Activated T-helper 1 cell treated with anti-CD3 and anti-CD28 coated beads, Interleukin-12 subunit alpha, Interleukin-12 subunit beta, Interleukin-2, Interleukin-4 antibody, amounts not matched to agents 30 ng/mL and 10 ng/mL and 1 ng/mL, durations not matched to agents 14 hours and 24 hours and 36 hours (primary cell): ENCODE measurements at regions of chr18 and their contacts with region 1.

Region 1: GRCh38 chr18:45910405-45911023 is 56.6 kb downstream of the EPG5 start:
- DNase-seq: peak; percentile 25
- H3K4me3 Mint-ChIP-seq: no peak overlapping the region
- H3K27ac Mint-ChIP-seq: no peak overlapping the region
- H3K4me1 Mint-ChIP-seq: no peaks in the 10 kb centered on the region
- H3K27me3 Mint-ChIP-seq: no peaks in the 10 kb centered on the region

Region 2: DNA sequence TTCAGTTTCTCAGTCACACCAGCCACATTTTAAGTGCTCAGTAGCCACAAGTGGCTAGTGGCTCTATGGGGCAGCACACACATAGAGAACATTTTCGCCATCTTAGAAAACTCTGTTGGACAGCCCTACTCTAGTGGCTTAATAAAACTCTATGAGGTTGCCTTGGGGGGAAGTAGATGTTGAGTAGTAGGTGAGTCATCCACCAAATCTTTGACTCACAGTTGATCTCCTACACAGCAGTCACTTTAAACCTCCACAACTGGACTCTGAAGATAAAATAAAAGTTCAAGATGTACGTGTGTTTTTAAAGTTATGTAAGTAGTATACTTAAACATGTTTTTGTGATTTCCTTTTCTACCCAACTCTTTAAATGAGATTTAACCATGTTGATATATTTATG is 850.8 kb before region 1 on chr18:
- intact Hi-C with region 1: no loop called
- DNase-seq: no peak
- H3K4me3 Mint-ChIP-seq: no peak overlapping the region
- H3K27ac Mint-ChIP-seq: no peak overlapping the region
- H3K4me1 Mint-ChIP-seq: no peaks in the 10 kb centered on the region
- H3K27me3 Mint-ChIP-seq: peaks cover 3% of the 10 kb centered on the region

Region 3: GRCh38 chr18:45621061-45621511 is 289.4 kb before region 1 on chr18:
- intact Hi-C with region 1: loop called (anchors 1 kb)
- DNase-seq: peak; percentile 9
- H3K4me3 Mint-ChIP-seq: no peak overlapping the region
- H3K27ac Mint-ChIP-seq: no peak overlapping the region
- H3K4me1 Mint-ChIP-seq: no peaks in the 10 kb centered on the region
- H3K27me3 Mint-ChIP-seq: peaks cover 15% of the 10 kb centered on the region

Region 4: GRCh38 chr18:45722899-45723298 is 187.6 kb before region 1 on chr18:
- intact Hi-C with region 1: loop called (anchors 1 kb)
- DNase-seq: peak; percentile 54
- H3K4me3 Mint-ChIP-seq: no peak overlapping the region
- H3K27ac Mint-ChIP-seq: no peak overlapping the region
- H3K4me1 Mint-ChIP-seq: no peaks in the 10 kb centered on the region
- H3K27me3 Mint-ChIP-seq: peaks cover 21% of the 10 kb centered on the region

Region 5: GRCh38 chr18:45896991-45897390 is 13.5 kb before region 1 on chr18:
- intact Hi-C with region 1: no loop called
- DNase-seq: no peak
- H3K4me3 Mint-ChIP-seq: no peak overlapping the region
- H3K27ac Mint-ChIP-seq: no peak overlapping the region
- H3K4me1 Mint-ChIP-seq: peaks cover 5% of the 10 kb centered on the region
- H3K27me3 Mint-ChIP-seq: no peaks in the 10 kb centered on the region